Sigmoid colon (tissue), 7 donors: ENCODE measurements at regions of chr21 and their contacts with region 1.

Region 1: DNA sequence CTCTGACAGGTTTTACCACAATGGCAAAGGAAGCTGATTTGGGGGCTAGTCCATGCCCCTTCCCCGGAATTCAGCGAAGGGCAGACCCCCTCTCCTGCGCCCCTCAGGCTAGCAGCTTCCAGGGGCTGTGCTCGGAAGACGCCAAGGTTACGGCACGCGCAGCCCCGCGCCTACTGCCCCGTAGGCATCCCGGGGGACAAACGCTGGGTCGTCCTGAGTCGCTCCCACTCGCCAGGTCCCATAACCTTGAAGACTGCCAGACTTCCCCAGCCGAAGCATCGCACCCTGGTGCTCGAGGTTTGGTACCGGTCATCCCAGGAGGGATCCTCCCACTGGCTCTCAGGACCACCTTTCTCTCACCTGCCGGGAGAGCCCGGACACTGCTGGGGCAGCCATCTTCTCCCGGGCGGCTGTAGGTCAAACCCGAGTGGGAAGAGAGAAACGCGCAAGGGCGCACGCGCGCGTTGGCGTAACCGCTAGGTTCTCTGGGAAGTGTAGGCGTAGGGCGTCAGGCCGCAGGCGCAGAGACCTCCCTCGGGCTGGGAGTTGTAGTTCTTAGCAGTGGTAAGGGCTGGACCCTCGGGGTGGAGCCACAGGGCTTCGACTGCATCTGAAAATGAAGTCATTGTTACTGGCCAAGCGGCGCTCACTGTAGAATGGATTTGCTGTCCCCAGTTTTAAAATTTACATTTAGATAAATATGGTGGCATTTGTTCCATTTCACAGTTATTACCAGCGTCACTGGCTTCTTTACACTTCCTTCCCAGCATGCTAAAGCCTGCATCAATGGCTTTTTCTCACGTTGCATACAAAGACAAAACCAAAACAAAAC is at the start of gene ATP5PO:
- DNase-seq: peak; percentile 99
- H3K4me3 ChIP-seq: peak within 1 kb of the TSS; percentile 72 to 97 (median 90)
- H3K27ac ChIP-seq: peak within 1 kb of the TSS; percentile 83 to 94 (median 90)
- H3K4me1 ChIP-seq: peaks cover 0 to 26% (median 23%) of the 10 kb centered on the region in 4 donors
- H3K27me3 ChIP-seq: no peaks in the 10 kb centered on the region
- CTCF ChIP-seq: no peak
- EP300 ChIP-seq: peak in 1 of 4 donors; percentile 12
- POLR2A ChIP-seq: peak; percentile 76 to 89
- total RNA-seq, gene ATP5PO: 277 to 468 (median 356) TPM

Region 2: GRCh38 chr21:33578214-33578613 is 337.4 kb before region 1 on chr21:
- intact Hi-C with region 1: no loop called
- DNase-seq: no peak
- H3K4me3 ChIP-seq: no peak overlapping the region
- H3K27ac ChIP-seq: no peak overlapping the region
- H3K4me1 ChIP-seq: peaks cover 0 to 4% (median 2%) of the 10 kb centered on the region in 4 donors
- H3K27me3 ChIP-seq: no peaks in the 10 kb centered on the region
- CTCF ChIP-seq: no peak
- EP300 ChIP-seq: no peak
- POLR2A ChIP-seq: no peak

Region 3: GRCh38 chr21:34614633-34615486 is 699.3 kb after region 1 on chr21 and contains the start of gene RCAN1:
- intact Hi-C with region 1: loop called (anchors 5 kb)
- DNase-seq: peak; percentile 95
- H3K4me3 ChIP-seq: peak within 1 kb of the TSS; percentile 60 to 89 (median 74)
- H3K27ac ChIP-seq: peak within 1 kb of the TSS; percentile 89 to 93 (median 90)
- H3K4me1 ChIP-seq: peaks cover 0 to 28% (median 16%) of the 10 kb centered on the region in 4 donors
- H3K27me3 ChIP-seq: no peaks in the 10 kb centered on the region
- CTCF ChIP-seq: no peak
- EP300 ChIP-seq: no peak
- POLR2A ChIP-seq: peak in 1 of 2 donors; percentile 17
- total RNA-seq, gene RCAN1: 21.4 to 79.6 (median 28.2) TPM